Heart left ventricle (tissue), 16 donors: ENCODE measurements at regions of chr20 and their contacts with region 1.

Region 1: GRCh38 chr20:33992923-33993575 is 662 bp upstream of the RALY start:
- DNase-seq: peak; percentile 99 to 100 (median 99)
- ATAC-seq: peak; percentile 92 to 96 (median 95)
- H3K4me3 ChIP-seq: peak overlapping the region; percentile 74 to 98 (median 90)
- H3K27ac ChIP-seq: peak overlapping the region; percentile 97 to 99 (median 99)
- H3K4me1 ChIP-seq: peaks cover 0 to 56% (median 37%) of the 10 kb centered on the region in 12 donors
- H3K27me3 ChIP-seq: no peaks in the 10 kb centered on the region
- CTCF ChIP-seq: no peak
- POLR2A ChIP-seq: peak; percentile 54 to 85

Region 2: GRCh38 chr20:33731693-33732165 is 261.3 kb before region 1 on chr20 and contains the start of gene ZNF341:
- intact Hi-C with region 1: loop called in 2 of 10 experiments (anchors 2 to 5 kb)
- DNase-seq: peak; percentile 88 to 94 (median 92)
- ATAC-seq: peak; percentile 72 to 91 (median 88)
- H3K4me3 ChIP-seq: peak within 1 kb of the TSS; percentile 47 to 71 (median 64)
- H3K27ac ChIP-seq: peak within 1 kb of the TSS; percentile 86 to 99 (median 92)
- H3K4me1 ChIP-seq: peaks cover 0 to 29% (median 20%) of the 10 kb centered on the region in 12 donors
- H3K27me3 ChIP-seq: no peaks in the 10 kb centered on the region
- CTCF ChIP-seq: peak; percentile 82 to 97 (median 90)
- POLR2A ChIP-seq: no peak
- total RNA-seq, gene ZNF341: 1.2 to 3.3 (median 1.5) TPM

Region 3: DNA sequence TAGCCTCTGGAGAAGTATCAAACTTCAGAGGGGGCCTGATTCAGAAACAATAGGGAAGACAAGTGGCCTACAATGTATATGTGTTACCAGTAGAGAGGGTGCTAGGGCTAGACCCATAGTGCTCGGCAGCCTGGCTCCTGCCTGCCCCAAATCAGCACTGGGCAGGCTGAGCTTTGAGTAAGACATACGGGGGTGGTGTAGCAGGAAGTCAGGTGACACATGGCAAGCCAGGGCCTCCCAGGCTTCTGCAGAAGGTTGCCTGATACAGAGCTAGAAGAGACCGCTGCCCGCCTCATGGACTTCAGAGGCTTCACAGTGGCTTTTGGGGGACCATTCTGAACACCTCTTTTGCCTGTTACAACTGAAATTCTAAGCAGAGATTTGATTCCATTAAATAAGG is 44.1 kb after region 1 on chr20:
- intact Hi-C with region 1: loop called in 8 of 10 experiments (anchors 2 to 10 kb)
- DNase-seq: peak in 2 of 5 donors; percentile 25 to 36
- ATAC-seq: peak; percentile 32 to 51 (median 50)
- H3K4me3 ChIP-seq: no peak overlapping the region
- H3K27ac ChIP-seq: peak overlapping the region in 2 of 12 donors; percentile 5 to 11
- H3K4me1 ChIP-seq: peaks cover 9 to 70% (median 68%) of the 10 kb centered on the region in 12 donors
- H3K27me3 ChIP-seq: no peaks in the 10 kb centered on the region
- CTCF ChIP-seq: no peak
- POLR2A ChIP-seq: no peak

Region 4: DNA sequence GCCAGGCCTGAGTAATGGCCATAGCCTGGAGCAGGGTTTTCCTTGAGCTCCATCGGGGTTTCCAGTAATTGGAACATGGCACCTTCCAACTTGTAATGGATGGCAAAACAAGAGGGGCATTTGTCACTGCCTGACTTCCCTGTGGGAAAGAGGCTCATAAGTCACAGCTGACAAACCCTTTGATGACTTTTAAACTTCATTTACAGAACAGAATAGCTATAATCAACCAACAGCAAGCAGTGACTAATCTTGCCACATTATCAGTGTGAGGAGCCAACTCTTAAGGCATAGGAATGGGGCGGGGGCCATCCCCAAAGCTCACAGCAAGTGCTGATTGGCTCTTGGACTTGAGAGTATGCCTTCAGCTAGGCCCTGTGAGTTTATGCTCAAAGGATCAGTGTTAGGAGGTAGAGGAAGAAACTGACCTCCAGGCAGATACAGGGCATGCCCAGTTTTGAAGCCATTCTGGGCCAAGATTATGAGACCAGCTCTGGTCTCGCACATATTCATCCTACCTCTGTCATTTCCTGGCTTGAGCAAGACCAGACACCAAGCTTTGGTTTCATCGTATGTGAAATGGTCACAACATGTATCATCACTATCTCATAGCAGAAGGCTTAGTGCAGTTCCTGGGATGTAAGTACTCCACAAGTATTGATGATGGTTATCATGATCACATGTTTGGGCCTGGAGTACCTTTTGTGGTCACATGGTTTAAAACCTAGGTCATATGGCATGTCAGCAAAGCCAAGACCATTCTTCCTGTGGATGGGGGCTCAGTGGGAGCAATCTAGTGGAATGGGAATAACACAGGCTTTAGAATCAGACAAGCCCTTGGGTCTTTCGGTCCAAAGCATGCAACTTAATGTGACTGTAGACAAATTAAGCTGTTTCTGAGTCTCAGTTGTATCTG is 69.8 kb after region 1 on chr20:
- intact Hi-C with region 1: loop called in 9 of 10 experiments (anchors 2 to 10 kb)
- DNase-seq: no peak
- ATAC-seq: no peak
- H3K4me3 ChIP-seq: no peak overlapping the region
- H3K27ac ChIP-seq: no peak overlapping the region
- H3K4me1 ChIP-seq: peaks cover 0 to 52% (median 18%) of the 10 kb centered on the region in 12 donors
- H3K27me3 ChIP-seq: no peaks in the 10 kb centered on the region
- CTCF ChIP-seq: no peak
- POLR2A ChIP-seq: no peak

Region 5: DNA sequence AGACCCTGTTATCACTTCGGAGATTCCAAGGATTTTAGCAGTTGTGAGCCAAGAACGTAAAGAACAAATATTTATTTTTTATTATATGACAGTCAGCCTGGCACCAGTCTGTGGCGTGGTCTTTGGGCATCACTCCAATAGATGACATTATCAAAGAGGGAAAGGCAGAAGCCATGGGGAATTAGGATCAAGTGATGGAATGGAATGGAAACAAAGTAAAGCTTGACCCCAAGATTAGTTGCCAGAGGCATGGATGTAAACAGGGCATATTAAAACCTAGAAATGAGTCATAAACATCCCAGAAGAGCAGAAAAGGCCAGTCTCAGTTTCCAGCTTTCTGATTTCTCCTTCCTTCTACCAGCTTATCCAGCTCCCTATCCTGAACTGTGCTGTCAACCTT is 107.5 kb after region 1 on chr20:
- intact Hi-C with region 1: no loop called
- DNase-seq: no peak
- ATAC-seq: no peak
- H3K4me3 ChIP-seq: no peak overlapping the region
- H3K27ac ChIP-seq: no peak overlapping the region
- H3K4me1 ChIP-seq: peaks cover 0 to 32% (median 6%) of the 10 kb centered on the region in 12 donors
- H3K27me3 ChIP-seq: no peaks in the 10 kb centered on the region
- CTCF ChIP-seq: no peak
- POLR2A ChIP-seq: no peak

Region 6: GRCh38 chr20:34111702-34112599 is 118.9 kb after region 1 on chr20 and contains the start of gene EIF2S2:
- intact Hi-C with region 1: loop called in 2 of 10 experiments (anchors 1 to 5 kb)
- DNase-seq: peak; percentile 95 to 98 (median 97)
- ATAC-seq: peak; percentile 97 to 98 (median 98)
- H3K4me3 ChIP-seq: peak within 1 kb of the TSS; percentile 63 to 99 (median 86)
- H3K27ac ChIP-seq: peak within 1 kb of the TSS; percentile 64 to 98 (median 96)
- H3K4me1 ChIP-seq: peaks cover 3 to 50% (median 30%) of the 10 kb centered on the region in 12 donors
- H3K27me3 ChIP-seq: no peaks in the 10 kb centered on the region
- CTCF ChIP-seq: no peak
- POLR2A ChIP-seq: peak; percentile 68 to 96
- total RNA-seq, gene EIF2S2: 35.5 to 53.8 (median 40.9) TPM